RWPE1 (cell line): ENCODE measurements at regions of chr5 and their contacts with region 1.

Region 1: GRCh38 chr5:171418316-171418981 is 998 bp upstream of the FGF18 start:
- DNase-seq: peak; percentile 93
- H3K27ac ChIP-seq: no peak overlapping the region
- CTCF ChIP-seq: peak; percentile 96

Region 2: DNA sequence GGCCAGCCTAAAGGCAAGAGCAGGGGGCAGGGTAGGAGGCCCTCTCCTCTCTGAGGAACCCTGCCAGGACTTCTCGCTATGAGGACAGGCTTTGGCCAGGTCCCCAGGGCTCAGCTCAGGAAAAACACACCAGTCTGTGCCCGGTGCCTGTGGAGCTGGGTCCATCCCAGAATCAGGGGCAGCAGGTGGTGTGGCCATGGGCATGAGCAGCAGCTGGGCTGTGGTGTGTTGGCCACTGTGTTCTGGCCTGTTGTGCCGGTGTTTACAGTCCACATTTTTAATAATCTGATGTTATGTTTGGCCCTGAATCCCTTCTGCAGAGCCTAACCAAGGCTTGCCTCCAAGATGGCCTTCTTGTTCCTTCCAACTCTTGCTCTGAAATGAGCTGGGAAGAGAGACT is 78.0 kb after region 1 on chr5:
- CTCF ChIA-PET with region 1: no interaction called
- POLR2A ChIA-PET with region 1: interaction called, 11 read pairs
- DNase-seq: no peak
- H3K27ac ChIP-seq: no peak overlapping the region
- CTCF ChIP-seq: no peak

Region 3: DNA sequence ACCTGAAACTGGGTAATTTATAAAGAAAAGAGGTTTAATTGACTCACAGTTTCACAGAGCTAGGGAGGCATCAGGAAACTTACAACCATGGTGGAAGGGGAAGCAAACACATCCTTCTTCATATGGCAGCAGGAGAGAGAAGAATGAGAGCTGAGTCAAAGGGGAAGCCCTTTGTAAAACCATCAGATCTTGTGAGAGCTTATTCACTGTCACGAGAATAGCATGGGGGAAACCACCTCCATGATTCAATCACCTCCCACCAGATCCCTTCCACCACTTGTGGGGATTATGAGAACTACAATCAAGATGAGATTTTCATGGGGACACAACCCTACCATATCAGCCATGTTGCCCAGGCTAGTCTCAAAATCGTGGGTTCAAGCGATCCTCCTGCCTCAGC is 144.4 kb after region 1 on chr5:
- CTCF ChIA-PET with region 1: no interaction called
- POLR2A ChIA-PET with region 1: no interaction called
- DNase-seq: no peak
- H3K27ac ChIP-seq: no peak overlapping the region
- CTCF ChIP-seq: no peak

Region 4: GRCh38 chr5:171630027-171630669 is 211.7 kb after region 1 on chr5:
- CTCF ChIA-PET with region 1: interaction called, 12 read pairs
- POLR2A ChIA-PET with region 1: no interaction called
- DNase-seq: peak; percentile 87
- H3K27ac ChIP-seq: no peak overlapping the region
- CTCF ChIP-seq: peak; percentile 79

Region 5: GRCh38 chr5:171907725-171908343 is 489.4 kb after region 1 on chr5:
- CTCF ChIA-PET with region 1: interaction called, 29 read pairs
- POLR2A ChIA-PET with region 1: no interaction called
- DNase-seq: peak; percentile 53
- H3K27ac ChIP-seq: no peak overlapping the region
- CTCF ChIP-seq: peak; percentile 92